Heart left ventricle (tissue), 16 donors: ENCODE measurements at regions of chr2 and their contacts with region 1.

Region 1: GRCh38 chr2:178804791-178805190 is 2.4 kb downstream of the TTN start:
- DNase-seq: peak in 1 of 5 donors; percentile 6
- ATAC-seq: peak in 2 of 4 donors; percentile 2 to 5
- H3K4me3 ChIP-seq: peak overlapping the region; percentile 25 to 66 (median 55)
- H3K27ac ChIP-seq: peak overlapping the region; percentile 39 to 97 (median 91)
- H3K4me1 ChIP-seq: peaks cover 0 to 3% (median 0%) of the 10 kb centered on the region in 12 donors
- H3K27me3 ChIP-seq: no peaks in the 10 kb centered on the region
- CTCF ChIP-seq: peak; percentile 24 to 67 (median 52)
- POLR2A ChIP-seq: no peak

Region 2: GRCh38 chr2:178863856-178864620 is 59.2 kb after region 1 on chr2:
- intact Hi-C with region 1: loop called in 5 of 10 experiments (anchors 2 to 10 kb)
- DNase-seq: peak; percentile 82 to 92 (median 85)
- ATAC-seq: peak; percentile 84 to 89 (median 88)
- H3K4me3 ChIP-seq: peak overlapping the region in 9 of 12 donors; percentile 8 to 34 (median 21)
- H3K27ac ChIP-seq: peak overlapping the region; percentile 73 to 96 (median 92)
- H3K4me1 ChIP-seq: peaks cover 4 to 68% (median 48%) of the 10 kb centered on the region in 12 donors
- H3K27me3 ChIP-seq: no peaks in the 10 kb centered on the region
- CTCF ChIP-seq: no peak
- POLR2A ChIP-seq: peak in 1 of 2 donors; percentile 45